ENCODE measurements at regions of chr2 and their contacts with region 1.

Region 1: DNA sequence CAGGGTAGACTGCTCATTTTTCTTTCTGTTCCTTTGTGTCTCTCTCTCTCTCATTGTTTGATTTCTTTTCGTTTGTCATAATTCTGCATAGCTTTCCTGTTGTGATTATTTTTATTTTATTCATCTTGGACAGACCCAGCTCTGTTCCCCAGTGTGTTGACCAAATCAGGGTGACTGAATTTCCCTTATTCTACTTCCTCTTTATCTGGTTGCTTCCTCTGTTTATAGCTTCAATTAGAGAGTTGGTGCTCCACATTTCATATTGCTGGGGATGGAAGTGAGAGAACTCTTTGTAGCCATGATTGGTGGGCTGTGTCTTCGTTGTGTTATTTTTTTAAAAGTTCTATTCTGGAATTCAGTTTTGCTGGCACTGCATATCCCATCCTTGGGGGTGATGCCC is 19.1 kb downstream of the PROKR1 start:
- DNase-seq: no peak
- ATAC-seq: no peak
- H3K4me3 ChIP-seq: no peak overlapping the region
- H3K27ac ChIP-seq: no peak overlapping the region
- H3K4me1 ChIP-seq: peaks cover 0 to 16% of the 10 kb centered on the region in 2 experiments; a peak in 2 of 5 replicates
- H3K27me3 ChIP-seq: no peaks in the 10 kb centered on the region
- CTCF ChIP-seq: no peak
- EP300 ChIP-seq: no peak
- POLR2A ChIP-seq: no peak
- RAD21 ChIP-seq: no peak

Region 2: DNA sequence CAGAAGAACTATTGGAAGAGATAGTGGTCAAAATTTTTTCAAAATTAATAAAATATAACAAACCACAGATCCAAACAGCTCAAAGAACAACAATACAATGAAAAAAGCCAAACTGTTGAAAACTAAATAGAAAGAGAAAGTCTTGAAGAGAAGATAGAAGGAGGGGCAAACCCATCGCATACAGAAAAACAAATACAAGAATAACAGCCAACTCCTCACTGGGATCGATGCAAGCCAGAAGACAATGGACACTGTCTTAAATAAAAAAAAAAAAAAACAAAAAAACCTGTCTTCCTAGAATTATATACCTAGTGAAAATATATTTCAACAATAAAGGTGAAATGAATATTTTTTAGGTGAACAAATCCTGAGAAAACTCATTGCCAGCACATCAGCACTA is 38.1 kb after region 1 on chr2:
- CTCF ChIA-PET with region 1: no interaction called
- POLR2A ChIA-PET with region 1: no interaction called
- in situ Hi-C with region 1: no loop called
- intact Hi-C with region 1: loop called (anchors 2 kb)
- DNase-seq: no peak
- ATAC-seq: no peak
- H3K4me3 ChIP-seq: no peak overlapping the region
- H3K27ac ChIP-seq: no peak overlapping the region
- H3K4me1 ChIP-seq: no peaks in the 10 kb centered on the region
- H3K27me3 ChIP-seq: no peaks in the 10 kb centered on the region
- CTCF ChIP-seq: no peak
- EP300 ChIP-seq: no peak
- POLR2A ChIP-seq: no peak
- RAD21 ChIP-seq: no peak

Region 3: GRCh38 chr2:69131983-69132675 is 469.7 kb after region 1 on chr2:
- CTCF ChIA-PET with region 1: no interaction called
- POLR2A ChIA-PET with region 1: no interaction called
- in situ Hi-C with region 1: no loop called
- intact Hi-C with region 1: no loop called
- DNase-seq: no peak
- ATAC-seq: no peak
- H3K4me3 ChIP-seq: no peak overlapping the region
- H3K27ac ChIP-seq: no peak overlapping the region
- H3K4me1 ChIP-seq: no peaks in the 10 kb centered on the region
- H3K27me3 ChIP-seq: peaks cover 3 to 10% of the 10 kb centered on the region in 2 experiments; a peak in 2 of 5 replicates
- CTCF ChIP-seq: no peak
- EP300 ChIP-seq: no peak
- POLR2A ChIP-seq: no peak
- RAD21 ChIP-seq: no peak

Measured in K562 (cell line).